PC-3 (cell line): ENCODE measurements at regions of chr1 and their contacts with region 1.

Region 1: DNA sequence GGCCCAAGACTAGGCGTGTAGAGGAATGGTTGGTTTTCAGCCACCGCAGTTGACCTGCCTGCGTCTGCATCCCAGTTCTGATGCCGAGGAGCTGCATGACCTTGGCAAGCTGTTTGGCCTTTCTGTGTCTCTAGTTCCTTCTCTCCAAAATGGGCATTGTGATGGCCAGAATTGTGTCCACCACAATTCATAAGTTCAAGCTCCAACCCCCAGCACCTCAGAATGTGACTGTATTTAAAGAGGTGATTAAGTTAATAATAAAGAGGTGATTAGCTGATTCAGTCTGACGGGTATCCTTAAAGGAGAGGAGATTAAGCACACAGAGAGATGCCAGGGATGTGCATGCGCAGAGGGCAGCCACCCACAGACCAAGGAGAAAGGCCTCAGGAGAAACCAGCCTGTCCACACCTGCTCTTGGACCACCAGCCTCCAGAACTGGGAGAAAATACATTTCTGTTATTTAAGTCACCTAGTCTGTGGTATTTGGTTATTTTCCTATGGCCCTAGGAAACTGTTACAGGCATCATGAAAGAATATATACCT is 28.5 kb downstream of the MAB21L3 start:
- DNase-seq: no peak
- ATAC-seq: no peak
- H3K4me3 ChIP-seq: no peak overlapping the region
- H3K27ac ChIP-seq: no peak overlapping the region
- H3K4me1 ChIP-seq: peaks cover 5% of the 10 kb centered on the region; the same call in 1 of the 2 replicates
- H3K27me3 ChIP-seq: no peaks in the 10 kb centered on the region
- CTCF ChIP-seq: no peak

Region 2: DNA sequence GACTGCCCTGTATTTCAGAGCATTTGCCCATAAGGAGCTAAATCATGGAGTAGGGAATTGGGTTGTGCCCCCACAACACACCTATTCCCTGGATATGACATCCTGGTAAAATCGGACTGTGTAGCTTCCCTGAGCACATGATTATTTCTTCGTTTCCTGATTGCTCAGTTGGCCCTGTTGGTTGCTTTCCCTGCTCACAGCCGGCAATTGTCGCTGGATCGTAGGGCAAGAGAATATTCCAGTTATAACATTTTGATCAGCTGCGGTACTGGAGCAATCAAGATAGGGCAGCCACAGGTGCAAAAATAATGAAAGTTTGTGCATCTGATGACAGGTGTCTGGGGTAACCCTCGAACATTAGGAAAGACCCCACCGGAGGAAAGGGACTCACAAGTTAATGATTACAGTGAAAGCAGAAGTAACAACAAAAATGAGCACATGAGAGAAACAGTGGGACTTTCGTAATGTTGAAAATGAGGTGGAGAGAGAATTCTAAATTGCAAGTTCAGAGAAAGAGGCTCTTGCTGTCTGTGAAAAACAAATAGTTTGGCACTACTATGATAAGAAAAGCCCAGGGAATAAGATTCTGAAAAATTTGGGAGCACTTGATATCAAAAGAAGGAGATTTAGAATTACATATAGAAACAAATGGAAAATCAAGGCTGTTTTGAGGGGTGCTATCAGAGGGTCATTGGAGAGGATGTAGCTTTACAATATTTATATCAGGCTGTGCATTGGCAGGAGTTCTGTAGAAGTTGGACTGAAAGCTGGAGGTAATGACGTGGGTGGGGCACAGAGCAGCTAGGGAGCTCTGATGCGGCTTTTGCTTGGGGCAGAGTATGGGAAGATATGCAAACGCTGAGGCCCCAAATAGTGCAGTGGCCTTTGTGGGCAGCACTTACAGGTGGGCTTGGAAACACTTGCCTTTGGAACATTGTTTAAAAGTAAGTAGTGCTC is 28.8 kb before region 1 on chr1 and contains the start of gene MAB21L3:
- CTCF ChIA-PET with region 1: interaction called, 3 read pairs
- POLR2A ChIA-PET with region 1: no interaction called
- intact Hi-C with region 1: loop called (anchors 1 kb)
- DNase-seq: peak; percentile 26
- ATAC-seq: peak; percentile 27; the same call in 1 of the 2 replicates
- H3K4me3 ChIP-seq: peak within 1 kb of the TSS; percentile 46; the same call in 1 of the 2 replicates
- H3K27ac ChIP-seq: peak within 1 kb of the TSS; percentile 94
- H3K4me1 ChIP-seq: peaks cover 64% of the 10 kb centered on the region
- H3K27me3 ChIP-seq: no peaks in the 10 kb centered on the region
- CTCF ChIP-seq: no peak
- total RNA-seq, gene MAB21L3: 1.4 and 2.6 TPM in 2 replicates

Region 3: GRCh38 chr1:116122955-116123757 is 16.5 kb before region 1 on chr1:
- CTCF ChIA-PET with region 1: interaction called, 11 read pairs
- POLR2A ChIA-PET with region 1: no interaction called
- intact Hi-C with region 1: no loop called
- DNase-seq: peak; percentile 92
- ATAC-seq: peak; percentile 88
- H3K4me3 ChIP-seq: peak overlapping the region; percentile 44
- H3K27ac ChIP-seq: peak overlapping the region; percentile 82
- H3K4me1 ChIP-seq: peaks cover 38% of the 10 kb centered on the region
- H3K27me3 ChIP-seq: no peaks in the 10 kb centered on the region
- CTCF ChIP-seq: no peak

Region 4: GRCh38 chr1:116485071-116485735 is 345.5 kb after region 1 on chr1:
- CTCF ChIA-PET with region 1: interaction called, 37 read pairs
- POLR2A ChIA-PET with region 1: no interaction called
- intact Hi-C with region 1: loop called (anchors 1 kb)
- DNase-seq: peak; percentile 94
- ATAC-seq: peak; percentile 60
- H3K4me3 ChIP-seq: no peak overlapping the region
- H3K27ac ChIP-seq: peak overlapping the region; percentile 92; the same call in 1 of the 2 replicates
- H3K4me1 ChIP-seq: peaks cover 55% of the 10 kb centered on the region
- H3K27me3 ChIP-seq: no peaks in the 10 kb centered on the region
- CTCF ChIP-seq: peak; percentile 98

Region 5: GRCh38 chr1:116711263-116711840 is 571.7 kb after region 1 on chr1:
- CTCF ChIA-PET with region 1: no interaction called
- POLR2A ChIA-PET with region 1: no interaction called
- intact Hi-C with region 1: no loop called
- DNase-seq: peak; percentile 45
- ATAC-seq: no peak
- H3K4me3 ChIP-seq: no peak overlapping the region
- H3K27ac ChIP-seq: no peak overlapping the region
- H3K4me1 ChIP-seq: no peaks in the 10 kb centered on the region
- H3K27me3 ChIP-seq: no peaks in the 10 kb centered on the region
- CTCF ChIP-seq: no peak